MCF 10A (cell line): ENCODE measurements at regions of chr1 and their contacts with region 1.

Region 1: DNA sequence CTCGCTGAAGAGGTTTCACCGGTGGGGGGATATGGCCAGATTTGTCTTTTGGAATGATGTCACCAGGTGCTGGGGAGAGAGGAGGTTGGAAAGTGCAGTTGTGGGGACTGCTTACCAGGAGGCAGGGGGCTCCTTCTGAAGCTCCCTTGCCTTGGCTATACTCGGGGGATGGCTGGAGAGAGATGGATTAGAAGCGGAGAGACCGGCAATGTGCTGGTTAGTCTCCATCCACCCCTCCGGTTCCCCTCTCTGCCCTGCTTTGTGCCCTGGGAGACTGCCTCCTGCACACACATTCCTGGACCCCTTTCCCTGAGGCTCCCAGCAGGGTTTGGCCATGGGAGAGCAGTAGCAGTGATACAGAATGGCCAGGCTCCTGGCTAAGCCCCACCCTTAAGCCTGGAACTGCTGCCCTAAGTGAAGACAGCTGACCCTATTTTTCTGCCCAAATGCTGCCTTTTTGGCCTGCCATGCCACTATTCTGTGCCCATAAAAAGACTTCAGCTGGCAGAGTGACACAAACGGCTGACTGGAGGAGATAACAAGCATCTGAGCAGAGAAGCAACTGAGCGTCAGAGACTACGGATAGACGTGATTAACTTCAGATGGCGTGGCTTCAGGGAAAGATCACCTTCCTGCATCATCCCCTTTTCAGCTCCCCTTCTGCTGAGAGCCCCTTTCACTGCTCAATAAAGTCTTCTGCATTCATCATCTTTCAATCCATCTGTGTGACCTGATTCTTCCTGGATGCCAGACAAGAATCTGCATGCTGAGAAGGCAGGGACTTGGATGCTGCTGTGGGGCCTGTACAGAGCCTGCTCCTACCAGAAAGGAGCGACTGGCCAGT is 14.5 kb upstream of the VPS13D start:
- DNase-seq: no peak
- H3K4me3 Mint-ChIP-seq: no peak overlapping the region
- H3K27ac Mint-ChIP-seq: no peak overlapping the region
- H3K4me1 Mint-ChIP-seq: no peaks in the 10 kb centered on the region
- H3K27me3 Mint-ChIP-seq: peaks cover 51% of the 10 kb centered on the region
- CTCF ChIP-seq: no peak

Region 2: GRCh38 chr1:12244078-12244477 is 28.7 kb after region 1 on chr1:
- CTCF ChIA-PET with region 1: no interaction called
- POLR2A ChIA-PET with region 1: no interaction called
- intact Hi-C with region 1: loop called (anchors 1 kb)
- DNase-seq: peak; percentile 38
- H3K4me3 Mint-ChIP-seq: no peak overlapping the region
- H3K27ac Mint-ChIP-seq: peak overlapping the region; percentile 66
- H3K4me1 Mint-ChIP-seq: peaks cover 18% of the 10 kb centered on the region
- H3K27me3 Mint-ChIP-seq: no peaks in the 10 kb centered on the region
- CTCF ChIP-seq: no peak

Region 3: GRCh38 chr1:12255918-12256317 is 40.6 kb after region 1 on chr1:
- CTCF ChIA-PET with region 1: no interaction called
- POLR2A ChIA-PET with region 1: no interaction called
- intact Hi-C with region 1: no loop called
- DNase-seq: no peak
- H3K4me3 Mint-ChIP-seq: no peak overlapping the region
- H3K27ac Mint-ChIP-seq: no peak overlapping the region
- H3K4me1 Mint-ChIP-seq: no peaks in the 10 kb centered on the region
- H3K27me3 Mint-ChIP-seq: no peaks in the 10 kb centered on the region
- CTCF ChIP-seq: no peak